Common myeloid progenitor, CD34-positive (primary cell): ENCODE measurements at regions of chr6 and their contacts with region 1.

Region 1: DNA sequence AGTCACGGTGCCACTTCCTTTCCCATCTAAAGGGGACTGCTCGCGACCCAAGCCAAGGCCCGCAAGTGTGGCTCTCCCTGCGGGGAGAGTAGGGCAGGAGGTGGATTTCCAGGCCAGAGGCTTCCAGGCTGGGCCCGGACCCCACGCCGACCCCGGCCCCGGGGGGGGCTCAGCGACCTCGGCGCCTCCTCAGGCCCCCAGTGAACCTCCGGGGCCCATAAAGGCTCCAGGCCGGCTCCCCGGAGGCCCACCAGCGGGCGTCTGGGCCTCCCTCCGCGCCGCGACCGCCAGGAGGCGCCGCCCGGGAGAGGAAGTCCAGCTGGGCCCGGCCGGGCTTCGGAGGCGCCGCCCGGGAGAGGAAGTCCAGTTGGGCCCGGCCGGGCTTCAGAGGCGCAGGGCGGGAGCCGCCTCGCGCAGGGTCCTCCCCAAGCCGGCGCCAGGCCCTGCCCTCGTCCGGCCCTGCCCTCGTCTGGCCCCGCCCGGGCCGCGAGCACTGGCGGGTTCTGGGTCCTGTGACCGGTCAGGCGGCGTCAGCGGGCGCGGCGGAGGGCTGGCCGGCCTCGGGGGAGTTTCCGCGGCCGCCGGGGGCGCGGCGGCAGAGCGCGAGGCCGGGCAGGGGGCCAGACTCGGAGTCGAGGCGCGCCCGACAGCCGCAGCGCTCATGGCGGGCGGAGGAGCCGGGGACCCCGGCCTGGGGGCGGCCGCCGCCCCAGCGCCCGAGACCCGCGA is at the start of gene RAB32:
- DNase-seq: peak; percentile 81 to 93 (median 91)
- H3K4me3 ChIP-seq: peak within 1 kb of the TSS; percentile 46 to 94 (median 85)
- H3K27ac ChIP-seq: peak within 1 kb of the TSS; percentile 84 to 91
- H3K4me1 ChIP-seq: peaks cover 11 to 44% (median 28%) of the 10 kb centered on the region in 4 experiments
- H3K27me3 ChIP-seq: no peaks in the 10 kb centered on the region

Region 2: DNA sequence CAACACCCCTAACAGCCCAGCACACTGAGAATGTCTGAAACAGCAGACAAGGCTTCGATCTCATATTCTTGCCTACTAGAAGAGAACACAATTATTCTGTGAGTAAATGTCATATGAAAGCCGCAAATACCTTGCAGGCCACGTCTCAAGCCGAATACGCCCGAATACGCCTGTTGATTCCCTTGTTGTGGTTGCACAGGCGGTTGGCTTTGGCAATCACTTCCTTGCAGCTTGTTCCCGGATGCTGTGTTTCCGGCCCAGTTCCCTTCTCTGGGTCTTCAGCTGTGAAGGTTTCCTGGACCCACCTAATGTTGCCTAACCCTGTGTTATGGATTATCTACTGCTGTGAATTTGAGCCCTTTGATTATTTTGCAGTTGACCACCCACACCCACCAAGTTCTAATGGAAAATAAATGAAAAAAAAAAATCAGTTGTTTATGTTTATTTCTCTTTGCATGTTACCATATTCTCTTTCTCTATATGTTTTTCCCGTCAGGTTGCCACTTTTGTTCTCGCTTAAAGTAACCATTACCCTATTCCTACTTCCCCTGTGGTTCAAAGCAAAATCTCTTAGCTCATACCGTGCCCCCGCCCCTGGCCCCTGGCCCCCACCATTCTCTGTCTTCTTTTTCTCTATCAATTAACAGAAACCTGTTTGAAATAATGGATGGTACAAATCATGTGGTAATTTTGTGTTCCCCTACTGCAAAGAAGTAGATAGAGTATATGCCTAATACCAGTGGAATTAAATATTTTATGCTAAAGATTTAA is 227.8 kb after region 1 on chr6:
- CTCF ChIA-PET with region 1: interaction called, 12 read pairs
- POLR2A ChIA-PET with region 1: interaction called, 10 read pairs
- DNase-seq: peak; percentile 97 to 100 (median 99)
- H3K4me3 ChIP-seq: peak overlapping the region in 5 of 7 experiments; percentile 15 to 60 (median 46)
- H3K27ac ChIP-seq: peak overlapping the region; percentile 52 to 78
- H3K4me1 ChIP-seq: peaks cover 12 to 42% (median 28%) of the 10 kb centered on the region in 4 experiments
- H3K27me3 ChIP-seq: no peaks in the 10 kb centered on the region